Motor neuron (in vitro differentiated cells): ENCODE measurements at regions of chr5 and their contacts with region 1.

Region 1: DNA sequence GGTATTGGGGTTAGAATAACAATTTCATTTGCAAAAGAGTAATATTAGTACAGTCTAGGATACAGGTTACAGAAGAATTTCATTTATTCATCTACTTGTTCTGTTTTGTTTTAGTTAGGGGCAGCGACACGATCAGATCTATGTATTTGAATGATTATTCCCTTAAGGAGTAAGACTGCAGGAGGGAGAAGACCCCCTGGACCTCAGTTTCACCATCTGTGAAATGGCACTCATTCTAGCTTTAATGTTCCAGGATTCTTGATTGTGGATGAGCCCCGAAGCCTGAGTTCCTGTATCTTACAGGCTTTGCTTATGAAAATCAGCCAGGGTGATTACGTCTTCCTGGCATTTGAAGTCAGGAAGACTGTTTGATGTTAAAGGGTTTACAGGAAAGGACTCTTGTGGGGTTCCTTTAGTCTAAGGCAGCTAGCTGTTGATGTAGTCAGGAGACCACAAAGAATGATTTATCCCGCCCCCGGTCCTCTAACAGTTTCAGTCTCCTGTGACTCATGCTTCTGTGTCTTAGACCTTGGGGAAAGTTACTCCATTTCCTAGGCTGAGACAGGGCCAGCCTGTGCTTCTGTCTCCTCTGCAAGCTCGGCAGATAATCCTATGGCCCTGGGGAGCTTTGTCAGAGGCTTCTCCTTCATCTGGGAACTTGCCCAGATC is 11.5 kb downstream of the SMIM3 start:
- ATAC-seq: peak; percentile 66 to 99 (median 80)
- H3K4me3 ChIP-seq: no peak overlapping the region
- H3K27ac ChIP-seq: no peak overlapping the region
- H3K4me1 ChIP-seq: no peaks in the 10 kb centered on the region

Region 2: DNA sequence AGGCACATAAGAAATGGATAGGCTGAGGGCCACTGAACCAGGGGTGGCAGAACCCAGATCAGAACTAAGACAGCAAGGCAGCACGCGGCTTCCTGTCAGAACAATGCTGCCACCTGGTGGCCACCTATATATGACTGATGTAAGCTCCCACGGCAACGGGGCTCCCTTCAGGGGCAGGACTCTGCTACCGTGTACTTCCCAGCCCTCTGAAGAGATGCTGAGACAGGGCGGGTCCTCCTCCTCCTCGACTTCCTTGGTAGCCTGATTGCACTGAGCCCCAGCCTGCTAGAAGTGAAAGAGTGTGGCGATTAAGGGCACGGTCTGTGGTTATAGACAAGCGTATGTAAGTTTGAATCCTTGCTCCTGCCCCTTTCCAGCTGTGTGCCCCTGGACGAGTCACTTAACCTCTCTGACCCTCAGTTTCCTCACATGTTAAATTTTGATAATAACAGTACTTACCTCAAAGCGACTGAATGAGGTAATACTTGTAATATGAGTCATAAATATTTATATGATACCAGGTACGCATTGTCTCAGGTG is 353.9 kb before region 1 on chr5:
- in situ Hi-C with region 1: no loop called
- ATAC-seq: peak; percentile 83 to 94 (median 92)
- H3K4me3 ChIP-seq: no peak overlapping the region
- H3K27ac ChIP-seq: no peak overlapping the region
- H3K4me1 ChIP-seq: no peaks in the 10 kb centered on the region

Region 3: DNA sequence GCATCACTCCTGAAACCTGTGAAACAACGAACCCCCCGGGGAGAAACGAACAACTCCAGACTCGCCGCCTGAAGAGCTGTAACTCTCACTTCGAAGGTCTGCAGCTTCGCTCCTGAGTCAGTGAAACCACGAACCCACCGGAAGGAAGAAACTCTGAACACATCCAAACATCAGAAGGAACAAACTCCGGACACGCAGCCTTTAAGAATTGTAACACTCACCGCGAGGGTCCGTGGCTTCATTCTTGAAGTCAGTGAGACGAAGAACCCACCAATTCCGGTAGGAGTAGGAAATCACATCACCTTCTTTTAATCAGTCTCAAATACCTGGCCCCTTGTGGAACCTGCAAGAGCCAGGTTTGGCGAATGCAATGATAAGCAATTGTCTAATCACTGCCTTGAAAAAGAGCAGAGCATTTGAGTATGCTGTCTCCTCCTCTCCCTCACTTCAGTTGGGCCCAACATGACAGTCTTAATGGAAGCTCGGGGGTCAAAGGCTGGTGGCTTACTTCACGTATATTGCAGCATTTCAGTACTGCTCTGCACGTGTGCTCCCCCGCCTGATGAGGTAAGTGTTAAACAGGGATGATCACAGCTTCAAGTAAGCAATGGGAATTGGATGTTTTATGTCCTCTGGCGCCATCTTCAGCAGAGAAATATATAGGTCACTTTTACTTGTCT is 56.7 kb after region 1 on chr5:
- in situ Hi-C with region 1: loop called in 1 of 9 experiments (anchors 10 kb)
- ATAC-seq: peak; percentile 84 to 96 (median 91)
- H3K4me3 ChIP-seq: no peak overlapping the region
- H3K27ac ChIP-seq: no peak overlapping the region
- H3K4me1 ChIP-seq: no peaks in the 10 kb centered on the region

Region 4: GRCh38 chr5:150895431-150896428 is 105.7 kb after region 1 on chr5:
- in situ Hi-C with region 1: no loop called
- ATAC-seq: no peak
- H3K4me3 ChIP-seq: no peak overlapping the region
- H3K27ac ChIP-seq: no peak overlapping the region
- H3K4me1 ChIP-seq: no peaks in the 10 kb centered on the region